ENCODE measurements at regions of chr2 and their contacts with region 1.

Region 1: DNA sequence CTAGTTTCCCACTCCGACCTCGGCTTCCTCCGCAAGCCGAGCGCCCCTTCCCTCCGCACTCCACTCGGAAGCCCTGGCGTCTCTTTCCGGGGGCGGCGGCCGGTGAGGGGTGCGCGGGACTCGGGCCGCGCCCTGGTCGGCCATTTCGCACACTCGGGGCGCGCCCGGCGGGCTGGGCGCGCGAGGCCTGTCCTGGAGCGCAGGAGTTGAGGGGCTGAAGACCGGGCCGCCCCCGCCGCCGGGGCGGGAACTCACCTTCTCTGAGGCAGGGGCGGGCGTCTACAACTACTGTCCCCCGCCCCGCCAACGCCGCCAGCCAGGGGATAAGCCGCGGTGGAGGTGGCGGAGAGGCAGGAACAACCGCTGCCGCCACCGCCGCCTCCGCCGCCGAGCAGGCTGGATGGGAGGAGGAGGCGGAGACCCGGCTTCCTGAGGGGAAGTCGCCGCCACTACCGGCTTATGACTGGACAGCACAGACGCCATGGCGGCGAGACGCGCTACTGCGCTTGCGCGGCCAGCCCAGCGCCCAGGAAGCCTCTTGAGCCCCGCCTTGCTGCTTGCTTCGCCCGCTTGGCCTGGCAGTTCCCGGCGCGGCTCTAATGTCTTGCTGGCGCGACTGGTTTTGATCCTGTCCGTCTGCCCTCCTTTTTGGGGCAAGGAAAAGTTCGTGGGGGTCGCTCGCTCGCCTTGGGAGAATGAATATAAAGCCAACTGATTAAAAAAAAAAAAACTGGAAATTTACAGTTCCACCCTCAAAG is at the start of gene KRCC1:
- DNase-seq: peak; percentile 96
- ATAC-seq: peak; percentile 91
- H3K4me3 ChIP-seq: peak within 1 kb of the TSS; percentile 94
- H3K27ac ChIP-seq: peak within 1 kb of the TSS; percentile 68
- H3K4me1 ChIP-seq: peaks cover 19% of the 10 kb centered on the region
- H3K27me3 ChIP-seq: no peaks in the 10 kb centered on the region
- CTCF ChIP-seq: no peak
- total RNA-seq, gene KRCC1: 6.7 and 14.1 TPM in 2 replicates

Region 2: DNA sequence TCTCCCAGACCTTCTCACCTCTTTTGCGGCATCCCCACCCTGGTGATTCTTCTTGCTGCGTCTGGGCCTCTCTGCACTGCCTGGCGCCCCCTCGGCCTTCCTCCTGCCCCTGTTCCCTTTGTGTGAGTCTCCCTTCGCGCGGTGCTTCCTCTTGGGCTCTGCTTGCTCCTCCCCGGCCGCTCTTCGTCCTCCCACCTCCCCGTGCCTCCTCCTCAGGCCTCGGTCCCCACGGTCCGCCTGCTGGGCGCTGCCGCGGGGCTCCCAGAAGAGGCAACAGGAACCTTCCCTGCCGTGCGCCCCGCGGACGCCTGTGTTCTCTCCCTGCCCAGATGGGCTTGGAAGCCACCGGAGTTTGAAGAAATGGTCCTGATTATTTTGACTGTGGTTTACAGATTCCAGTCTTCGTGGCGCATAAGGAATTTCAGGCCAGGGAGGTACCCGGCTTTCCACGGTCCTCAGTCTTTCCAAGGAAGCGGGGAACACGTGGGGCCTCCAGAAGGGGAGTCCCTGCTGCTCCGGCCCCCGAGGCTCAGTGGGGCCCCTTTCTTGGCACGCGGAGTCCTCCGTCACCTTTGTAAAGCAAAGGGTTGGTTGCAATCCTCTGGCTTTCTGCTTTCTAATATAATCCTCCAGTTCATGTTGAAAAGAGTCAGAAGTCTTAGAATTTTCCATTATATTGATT is 52.3 kb before region 1 on chr2:
- CTCF ChIA-PET with region 1: no interaction called
- POLR2A ChIA-PET with region 1: no interaction called
- intact Hi-C with region 1: loop called (anchors 5 kb)
- DNase-seq: no peak
- ATAC-seq: no peak
- H3K4me3 ChIP-seq: no peak overlapping the region
- H3K27ac ChIP-seq: no peak overlapping the region
- H3K4me1 ChIP-seq: no peaks in the 10 kb centered on the region
- H3K27me3 ChIP-seq: no peaks in the 10 kb centered on the region
- CTCF ChIP-seq: no peak

Region 3: GRCh38 chr2:88016086-88016959 is 39.2 kb before region 1 on chr2 and contains the start of gene RNU2-63P:
- CTCF ChIA-PET with region 1: interaction called, 3 read pairs
- POLR2A ChIA-PET with region 1: no interaction called
- intact Hi-C with region 1: loop called (anchors 1 kb)
- DNase-seq: peak; percentile 92
- ATAC-seq: peak; percentile 88
- H3K4me3 ChIP-seq: peak within 1 kb of the TSS; percentile 72
- H3K27ac ChIP-seq: peak within 1 kb of the TSS; percentile 87
- H3K4me1 ChIP-seq: no peaks in the 10 kb centered on the region
- H3K27me3 ChIP-seq: no peaks in the 10 kb centered on the region
- CTCF ChIP-seq: no peak
- total RNA-seq, gene RNU2-63P: 122 TPM in 1 of 2 replicates, not detected in the other

Region 4: GRCh38 chr2:88038263-88039105 is 17.1 kb before region 1 on chr2:
- CTCF ChIA-PET with region 1: interaction called, 6 read pairs
- POLR2A ChIA-PET with region 1: interaction called, 7 read pairs
- intact Hi-C with region 1: loop called (anchors 1 kb)
- DNase-seq: peak; percentile 93
- ATAC-seq: peak; percentile 96
- H3K4me3 ChIP-seq: no peak overlapping the region
- H3K27ac ChIP-seq: peak overlapping the region; percentile 91
- H3K4me1 ChIP-seq: peaks cover 34% of the 10 kb centered on the region
- H3K27me3 ChIP-seq: no peaks in the 10 kb centered on the region
- CTCF ChIP-seq: no peak

Region 5: DNA sequence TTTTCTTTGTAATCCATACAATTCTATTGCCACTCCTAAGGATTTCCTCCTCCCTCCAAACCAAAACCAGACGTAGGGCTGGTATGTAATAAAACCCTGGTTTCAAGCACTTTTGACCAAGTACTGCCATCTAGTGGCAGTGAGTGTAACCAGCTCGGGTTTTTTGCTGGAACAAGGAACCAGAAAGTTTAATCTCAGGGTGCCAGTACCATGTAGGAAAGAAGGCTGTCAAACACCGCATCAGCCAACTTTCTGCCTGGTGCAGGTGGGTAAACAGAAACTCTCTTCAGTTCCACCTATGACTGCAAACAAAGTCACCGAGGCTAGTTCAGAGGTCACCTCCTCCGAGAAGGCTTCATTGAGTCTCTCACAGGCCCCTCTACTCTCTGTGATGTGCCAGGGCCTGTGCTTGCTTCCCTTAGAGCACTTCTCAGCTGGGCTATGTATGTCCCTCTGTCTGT is 104.4 kb after region 1 on chr2:
- CTCF ChIA-PET with region 1: interaction called, 31 read pairs
- POLR2A ChIA-PET with region 1: no interaction called
- intact Hi-C with region 1: loop called (anchors 1 kb)
- DNase-seq: peak; percentile 84
- ATAC-seq: peak; percentile 64
- H3K4me3 ChIP-seq: no peak overlapping the region
- H3K27ac ChIP-seq: no peak overlapping the region
- H3K4me1 ChIP-seq: no peaks in the 10 kb centered on the region
- H3K27me3 ChIP-seq: peaks cover 25% of the 10 kb centered on the region
- CTCF ChIP-seq: peak; percentile 91